Activated T-helper 1 cell treated with anti-CD3 and anti-CD28 coated beads, Interleukin-12 subunit alpha, Interleukin-12 subunit beta, Interleukin-2, Interleukin-4 antibody, amounts not matched to agents 30 ng/mL and 10 ng/mL and 1 ng/mL, durations not matched to agents 14 hours and 24 hours and 36 hours (primary cell): ENCODE measurements at regions of chr12 and their contacts with region 1.

Region 1: GRCh38 chr12:22974865-22975264 is 349.9 kb downstream of the ETNK1 start:
- DNase-seq: no peak
- H3K4me3 Mint-ChIP-seq: no peak overlapping the region
- H3K27ac Mint-ChIP-seq: no peak overlapping the region
- H3K4me1 Mint-ChIP-seq: no peaks in the 10 kb centered on the region
- H3K27me3 Mint-ChIP-seq: no peaks in the 10 kb centered on the region

Region 2: DNA sequence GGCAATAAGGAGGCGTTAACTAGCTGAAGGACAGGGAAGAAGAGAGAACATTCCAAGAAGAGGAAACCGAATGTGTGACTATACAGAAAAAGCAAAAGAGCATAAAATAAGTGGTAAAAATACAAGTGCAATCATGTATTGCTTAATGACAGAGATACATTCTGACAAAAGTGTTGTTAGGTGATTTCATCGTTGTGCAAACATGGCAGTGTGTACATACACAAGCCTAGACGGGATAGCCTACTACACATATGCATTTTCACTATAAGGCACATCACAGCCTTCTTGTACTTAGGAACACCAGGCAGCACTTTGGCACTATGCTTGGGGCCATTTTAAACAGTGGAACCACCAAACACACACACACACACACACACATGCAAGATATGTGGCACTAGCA is 1674.8 kb after region 1 on chr12:
- intact Hi-C with region 1: loop called (anchors 5 kb)
- DNase-seq: no peak
- H3K4me3 Mint-ChIP-seq: no peak overlapping the region
- H3K27ac Mint-ChIP-seq: no peak overlapping the region
- H3K4me1 Mint-ChIP-seq: no peaks in the 10 kb centered on the region
- H3K27me3 Mint-ChIP-seq: no peaks in the 10 kb centered on the region